ENCODE measurements at regions of chr11 and their contacts with region 1.

Region 1: DNA sequence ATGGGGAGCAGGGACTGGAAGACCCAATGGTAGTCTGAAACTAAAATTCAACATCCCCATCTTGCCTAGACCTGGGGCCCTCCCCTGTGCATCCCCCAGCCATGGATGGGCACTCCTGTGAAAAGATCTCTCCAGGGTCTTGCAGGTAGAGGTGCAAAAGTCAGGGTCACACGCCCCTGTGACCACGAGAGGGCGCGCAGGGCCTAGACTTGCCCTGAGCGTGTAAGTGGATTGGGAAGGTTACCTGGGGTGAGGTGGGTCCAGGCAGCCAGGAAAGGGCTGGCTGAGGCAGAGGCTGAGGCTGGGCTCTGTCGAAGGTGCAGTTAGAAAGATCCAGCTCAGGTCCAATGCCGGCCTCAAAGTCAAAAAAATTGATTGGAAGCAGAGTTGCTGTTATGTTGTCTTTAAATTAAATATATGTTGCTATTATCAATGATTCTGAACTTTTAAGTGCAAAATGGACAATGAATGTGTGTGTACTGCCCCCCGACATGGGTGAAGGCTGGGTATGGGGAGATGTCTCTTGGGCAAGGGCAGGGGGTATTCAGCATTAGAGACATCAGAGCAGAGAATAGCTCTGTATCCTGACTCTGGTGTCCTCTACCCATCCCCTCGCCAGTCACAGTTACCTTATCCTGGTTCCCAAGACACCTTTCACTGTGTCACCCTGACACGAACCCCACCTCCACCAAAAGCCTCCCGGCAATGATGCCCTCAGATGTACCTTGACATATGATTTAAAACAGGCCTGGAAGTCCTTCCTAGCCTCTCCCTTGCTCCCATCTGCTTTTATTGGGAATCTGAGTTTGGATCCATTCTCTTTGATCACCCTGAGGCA is 4.7 kb upstream of the POU2F3 start:
- DNase-seq: peak in 13 of 14 experiments; percentile 19 to 67 (median 43)
- ATAC-seq: no peak
- H3K4me3 ChIP-seq: no peak overlapping the region
- H3K4me3 Mint-ChIP-seq: no peak overlapping the region
- H3K27ac ChIP-seq: no peak overlapping the region
- H3K27ac Mint-ChIP-seq: no peak overlapping the region
- H3K4me1 ChIP-seq: no peaks in the 10 kb centered on the region
- H3K4me1 Mint-ChIP-seq: no peaks in the 10 kb centered on the region
- H3K27me3 ChIP-seq: peaks cover 15 to 26% of the 10 kb centered on the region in 2 experiments
- H3K27me3 Mint-ChIP-seq: peaks cover 64% of the 10 kb centered on the region
- CTCF ChIP-seq: peak; percentile 78

Region 2: GRCh38 chr11:120303004-120303637 is 67.9 kb after region 1 on chr11:
- CTCF ChIA-PET with region 1: interaction called, 3 read pairs
- POLR2A ChIA-PET with region 1: no interaction called
- intact Hi-C with region 1: loop called in 1 of 2 experiments (anchors 2 kb)
- DNase-seq: peak; percentile 26 to 80 (median 45)
- ATAC-seq: peak; percentile 62
- H3K4me3 ChIP-seq: no peak overlapping the region
- H3K4me3 Mint-ChIP-seq: no peak overlapping the region
- H3K27ac ChIP-seq: no peak overlapping the region
- H3K27ac Mint-ChIP-seq: no peak overlapping the region
- H3K4me1 ChIP-seq: no peaks in the 10 kb centered on the region
- H3K4me1 Mint-ChIP-seq: no peaks in the 10 kb centered on the region
- H3K27me3 ChIP-seq: peaks cover 0 to 3% of the 10 kb centered on the region in 2 experiments
- H3K27me3 Mint-ChIP-seq: peaks cover 45% of the 10 kb centered on the region
- CTCF ChIP-seq: peak; percentile 91

Region 3: DNA sequence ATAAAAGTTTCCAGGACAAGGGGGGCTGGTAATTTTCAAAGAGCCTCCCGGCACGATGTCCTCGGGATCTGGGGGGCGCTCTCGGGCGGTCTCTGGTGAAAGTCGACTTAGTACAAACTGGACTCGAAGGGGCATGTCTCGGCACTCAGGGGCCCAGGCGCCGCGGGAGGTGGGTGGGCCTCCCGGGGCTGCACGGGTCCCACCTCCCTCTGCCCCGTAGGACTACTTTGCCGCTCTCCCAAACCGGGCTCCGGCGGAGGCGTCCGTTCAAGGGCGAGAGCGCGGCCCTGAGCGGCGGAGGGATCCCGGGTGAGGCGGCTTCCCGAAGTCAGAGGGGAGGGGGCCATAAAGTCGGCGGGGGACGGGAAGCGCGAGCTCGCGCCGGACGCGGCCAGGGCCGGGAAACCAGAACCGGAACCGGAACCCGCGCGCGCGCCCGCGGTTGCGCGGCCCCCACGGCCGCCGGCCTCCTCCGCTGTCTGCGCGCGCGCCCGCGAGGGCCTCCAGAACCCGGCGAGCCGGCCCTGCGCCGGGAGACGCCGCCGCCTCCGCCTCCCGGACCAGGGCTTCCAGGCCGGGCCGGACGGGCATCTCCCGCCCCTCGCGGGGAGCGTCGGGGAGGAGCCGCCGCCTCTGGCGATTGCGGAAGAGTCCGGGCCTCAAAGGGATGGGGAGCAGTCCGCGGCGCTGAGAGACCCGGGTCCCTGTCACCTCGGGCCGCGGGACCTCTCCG is 100.8 kb after region 1 on chr11 and contains the start of gene ARHGEF12:
- CTCF ChIA-PET with region 1: no interaction called
- POLR2A ChIA-PET with region 1: no interaction called
- intact Hi-C with region 1: no loop called
- DNase-seq: peak; percentile 30 to 86 (median 62)
- ATAC-seq: peak; percentile 42
- H3K4me3 ChIP-seq: peak within 1 kb of the TSS; percentile 77
- H3K4me3 Mint-ChIP-seq: peak within 1 kb of the TSS; percentile 89
- H3K27ac ChIP-seq: no peak within 1 kb of the TSS
- H3K27ac Mint-ChIP-seq: no peak within 1 kb of the TSS
- H3K4me1 ChIP-seq: peaks cover 26% of the 10 kb centered on the region
- H3K4me1 Mint-ChIP-seq: peaks cover 30% of the 10 kb centered on the region
- H3K27me3 ChIP-seq: peaks cover 27 to 53% of the 10 kb centered on the region in 2 experiments
- H3K27me3 Mint-ChIP-seq: peaks cover 67% of the 10 kb centered on the region
- CTCF ChIP-seq: no peak
- total RNA-seq, gene ARHGEF12: 3.6 TPM

Region 4: GRCh38 chr11:120682866-120683265 is 447.6 kb after region 1 on chr11:
- CTCF ChIA-PET with region 1: no interaction called
- POLR2A ChIA-PET with region 1: no interaction called
- intact Hi-C with region 1: loop called in 1 of 2 experiments (anchors 2 kb)
- DNase-seq: no peak
- ATAC-seq: no peak
- H3K4me3 ChIP-seq: no peak overlapping the region
- H3K4me3 Mint-ChIP-seq: no peak overlapping the region
- H3K27ac ChIP-seq: no peak overlapping the region
- H3K27ac Mint-ChIP-seq: no peak overlapping the region
- H3K4me1 ChIP-seq: no peaks in the 10 kb centered on the region
- H3K4me1 Mint-ChIP-seq: no peaks in the 10 kb centered on the region
- H3K27me3 ChIP-seq: peaks cover 3 to 4% of the 10 kb centered on the region in 2 experiments
- H3K27me3 Mint-ChIP-seq: peaks cover 48% of the 10 kb centered on the region
- CTCF ChIP-seq: no peak

Measured in CD4-positive, alpha-beta T cell (primary cell).